B cell (primary cell): ENCODE measurements at regions of chr20 and their contacts with region 1.

Region 1: DNA sequence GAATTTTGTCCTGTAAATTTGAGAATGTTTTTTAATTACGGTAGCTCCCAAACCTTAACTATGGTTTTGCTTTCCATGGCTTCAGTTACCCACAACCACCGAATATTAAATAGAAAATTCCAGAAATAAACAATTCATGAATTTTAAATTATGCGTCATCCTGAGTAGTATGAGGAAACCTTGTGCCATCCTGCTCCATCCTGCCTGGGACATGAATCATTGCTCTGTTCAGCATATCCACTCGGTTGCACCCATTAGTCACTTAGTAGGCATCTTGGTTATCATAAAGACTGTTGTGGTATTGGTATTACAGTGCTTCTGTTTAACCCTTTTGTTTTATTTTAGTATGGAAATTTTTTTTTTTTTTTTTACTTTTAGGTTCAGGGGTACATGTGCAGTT is 39.7 kb downstream of the KCNS1 start:
- DNase-seq: no peak
- ATAC-seq: no peak
- H3K4me3 ChIP-seq: no peak overlapping the region
- H3K4me3 Mint-ChIP-seq: no peak overlapping the region
- H3K27ac ChIP-seq: peak overlapping the region in 1 of 2 donors; percentile 24
- H3K27ac Mint-ChIP-seq: no peak overlapping the region
- H3K4me1 ChIP-seq: peaks cover 7 to 11% of the 10 kb centered on the region in 2 donors
- H3K4me1 Mint-ChIP-seq: peaks cover 58% of the 10 kb centered on the region
- H3K27me3 ChIP-seq: no peaks in the 10 kb centered on the region
- H3K27me3 Mint-ChIP-seq: no peaks in the 10 kb centered on the region
- CTCF ChIP-seq: no peak

Region 2: GRCh38 chr20:45523821-45524220 is 462.6 kb after region 1 on chr20:
- CTCF ChIA-PET with region 1: no interaction called
- POLR2A ChIA-PET with region 1: interaction called, 13 read pairs
- intact Hi-C with region 1: no loop called
- DNase-seq: no peak
- ATAC-seq: no peak
- H3K4me3 ChIP-seq: no peak overlapping the region
- H3K4me3 Mint-ChIP-seq: no peak overlapping the region
- H3K27ac ChIP-seq: no peak overlapping the region
- H3K27ac Mint-ChIP-seq: no peak overlapping the region
- H3K4me1 ChIP-seq: no peaks in the 10 kb centered on the region
- H3K4me1 Mint-ChIP-seq: no peaks in the 10 kb centered on the region
- H3K27me3 ChIP-seq: peaks cover 0 to 18% (median 5%) of the 10 kb centered on the region in 4 experiments
- H3K27me3 Mint-ChIP-seq: peaks cover 51% of the 10 kb centered on the region
- CTCF ChIP-seq: no peak